ENCODE measurements at regions of chr10 and their contacts with region 1.

Region 1: GRCh38 chr10:73894245-73894971 is 16.5 kb upstream of the PLAU start:
- DNase-seq: no peak
- H3K4me3 ChIP-seq: no peak overlapping the region
- H3K27ac ChIP-seq: no peak overlapping the region
- H3K4me1 ChIP-seq: no peaks in the 10 kb centered on the region
- H3K27me3 ChIP-seq: no peaks in the 10 kb centered on the region
- CTCF ChIP-seq: no peak
- EP300 ChIP-seq: no peak
- POLR2A ChIP-seq: no peak

Region 2: DNA sequence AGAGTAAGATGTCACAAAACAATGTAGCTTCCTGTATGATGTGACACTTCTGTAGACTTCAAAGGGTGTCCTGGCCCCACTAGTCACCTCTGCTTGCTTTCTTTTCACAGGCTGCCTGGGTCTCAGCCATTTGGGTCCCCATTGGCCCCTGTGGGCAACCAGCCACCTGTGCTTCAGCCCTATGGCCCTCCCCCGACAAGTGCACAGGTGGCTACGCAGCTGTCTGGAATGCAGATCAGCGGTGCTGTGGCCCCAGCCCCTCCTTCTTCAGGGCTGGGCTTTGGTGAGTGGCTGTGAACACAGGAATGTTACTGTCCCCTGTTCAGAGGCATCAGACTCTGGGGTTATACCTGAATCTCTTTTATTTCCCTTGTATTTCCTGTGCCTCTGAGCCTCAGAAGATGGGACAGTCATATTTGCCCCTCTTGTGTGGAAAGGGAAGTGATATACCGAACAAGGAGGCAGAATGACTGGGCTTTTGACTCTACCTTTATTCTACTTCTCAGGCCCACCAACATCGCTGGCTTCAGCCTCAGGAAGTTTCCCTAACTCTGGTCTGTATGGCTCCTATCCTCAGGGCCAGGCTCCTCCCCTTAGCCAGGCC is 134.8 kb before region 1 on chr10:
- intact Hi-C with region 1: no loop called
- DNase-seq: no peak
- H3K4me3 ChIP-seq: no peak overlapping the region
- H3K27ac ChIP-seq: no peak overlapping the region
- H3K4me1 ChIP-seq: no peaks in the 10 kb centered on the region
- H3K27me3 ChIP-seq: no peaks in the 10 kb centered on the region
- CTCF ChIP-seq: no peak
- EP300 ChIP-seq: no peak
- POLR2A ChIP-seq: no peak

Region 3: GRCh38 chr10:74035303-74035702 is 140.9 kb after region 1 on chr10:
- intact Hi-C with region 1: no loop called
- DNase-seq: no peak
- H3K4me3 ChIP-seq: no peak overlapping the region
- H3K27ac ChIP-seq: no peak overlapping the region
- H3K4me1 ChIP-seq: peaks cover 8% of the 10 kb centered on the region
- H3K27me3 ChIP-seq: no peaks in the 10 kb centered on the region
- CTCF ChIP-seq: no peak
- EP300 ChIP-seq: no peak
- POLR2A ChIP-seq: no peak

Region 4: GRCh38 chr10:74081192-74081803 is 186.9 kb after region 1 on chr10:
- intact Hi-C with region 1: loop called in 3 of 4 experiments (anchors 5 kb)
- DNase-seq: peak in 3 of 5 donors; percentile 32 to 53 (median 44)
- H3K4me3 ChIP-seq: no peak overlapping the region
- H3K27ac ChIP-seq: no peak overlapping the region
- H3K4me1 ChIP-seq: no peaks in the 10 kb centered on the region
- H3K27me3 ChIP-seq: no peaks in the 10 kb centered on the region
- CTCF ChIP-seq: peak; percentile 41 to 70 (median 57)
- EP300 ChIP-seq: no peak
- POLR2A ChIP-seq: no peak

Region 5: GRCh38 chr10:75099952-75100763 is 1205.8 kb after region 1 on chr10:
- intact Hi-C with region 1: no loop called
- DNase-seq: peak; percentile 75 to 91 (median 89)
- H3K4me3 ChIP-seq: no peak overlapping the region
- H3K27ac ChIP-seq: peak overlapping the region in 1 of 2 donors; percentile 69
- H3K4me1 ChIP-seq: peaks cover 1% of the 10 kb centered on the region
- H3K27me3 ChIP-seq: no peaks in the 10 kb centered on the region
- CTCF ChIP-seq: peak; percentile 99
- EP300 ChIP-seq: no peak
- POLR2A ChIP-seq: no peak

Measured in ovary (tissue), 10 donors.